CD14-positive monocyte (primary cell): ENCODE measurements at regions of chr19 and their contacts with region 1.

Region 1: DNA sequence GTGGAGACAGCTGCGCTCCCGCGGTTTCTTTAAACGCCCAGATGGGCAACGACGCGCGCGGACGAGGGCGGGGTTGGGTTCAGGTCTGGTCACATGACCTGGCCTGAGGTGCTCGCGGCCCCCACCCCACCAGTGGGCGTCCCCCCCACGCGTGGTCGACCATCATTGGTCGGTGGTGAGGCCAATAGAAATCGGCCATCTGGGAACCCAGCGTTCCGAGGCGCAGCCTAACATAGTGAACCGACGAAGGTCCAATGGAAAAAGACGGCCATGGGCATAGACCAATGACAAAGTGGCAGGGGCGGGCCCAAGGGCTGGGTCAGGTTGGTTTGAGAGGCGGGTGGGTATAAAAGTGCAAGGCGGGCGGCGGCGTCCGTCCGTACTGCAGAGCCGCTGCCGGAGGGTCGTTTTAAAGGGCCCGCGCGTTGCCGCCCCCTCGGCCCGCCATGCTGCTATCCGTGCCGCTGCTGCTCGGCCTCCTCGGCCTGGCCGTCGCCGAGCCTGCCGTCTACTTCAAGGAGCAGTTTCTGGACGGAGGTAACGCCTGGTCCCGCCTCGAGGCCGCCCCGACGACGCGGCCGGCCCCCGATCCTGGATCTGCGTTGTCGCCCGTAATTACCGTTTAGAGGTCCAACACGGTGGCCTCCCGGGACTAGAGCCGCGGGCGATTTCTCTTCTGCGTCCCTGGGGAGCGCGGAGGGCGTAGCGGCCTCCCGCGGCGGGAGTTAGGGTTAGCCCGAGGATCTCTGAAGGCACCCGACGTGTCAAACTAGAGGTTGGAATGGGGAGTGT is at the start of gene CALR:
- DNase-seq: peak; percentile 99 to 100 (median 100)
- H3K4me3 ChIP-seq: peak within 1 kb of the TSS; percentile 77 to 100 (median 77)
- H3K4me3 Mint-ChIP-seq: peak within 1 kb of the TSS; percentile 97 to 99
- H3K27ac ChIP-seq: peak within 1 kb of the TSS; percentile 82 to 98
- H3K27ac Mint-ChIP-seq: peak within 1 kb of the TSS; percentile 91 to 97 (median 96)
- H3K4me1 ChIP-seq: peaks cover 47 to 64% of the 10 kb centered on the region in 2 donors
- H3K4me1 Mint-ChIP-seq: peaks cover 54% of the 10 kb centered on the region
- H3K27me3 ChIP-seq: no peaks in the 10 kb centered on the region
- H3K27me3 Mint-ChIP-seq: peaks cover 0 to 2% (median 1%) of the 10 kb centered on the region in 3 donors
- CTCF ChIP-seq: no peak
- polyA plus RNA-seq, gene CALR: 109 to 441 (median 133) TPM

Region 2: GRCh38 chr19:12881172-12881808 is 57.1 kb before region 1 on chr19 and contains the start of gene DNASE2:
- intact Hi-C with region 1: loop called in 1 of 2 experiments (anchors 10 kb)
- DNase-seq: peak; percentile 96 to 98 (median 97)
- H3K4me3 ChIP-seq: peak within 1 kb of the TSS; percentile 57 to 80 (median 78)
- H3K4me3 Mint-ChIP-seq: peak within 1 kb of the TSS; percentile 86 to 92
- H3K27ac ChIP-seq: peak within 1 kb of the TSS; percentile 90 to 94
- H3K27ac Mint-ChIP-seq: peak within 1 kb of the TSS; percentile 97 to 98 (median 97)
- H3K4me1 ChIP-seq: peaks cover 59 to 68% of the 10 kb centered on the region in 2 donors
- H3K4me1 Mint-ChIP-seq: peaks cover 52% of the 10 kb centered on the region
- H3K27me3 ChIP-seq: peaks cover 0 to 4% of the 10 kb centered on the region in 2 donors
- H3K27me3 Mint-ChIP-seq: peaks cover 4 to 20% (median 11%) of the 10 kb centered on the region in 3 donors
- CTCF ChIP-seq: no peak
- polyA plus RNA-seq, gene DNASE2: 38.8 to 91.6 (median 44.8) TPM

Region 3: GRCh38 chr19:12890787-12891552 is 47.5 kb before region 1 on chr19 and contains the start of gene GCDH:
- intact Hi-C with region 1: loop called (anchors 5 to 10 kb)
- DNase-seq: peak; percentile 96 to 99 (median 97)
- H3K4me3 ChIP-seq: peak within 1 kb of the TSS; percentile 39 to 88 (median 75)
- H3K4me3 Mint-ChIP-seq: peak within 1 kb of the TSS; percentile 89 to 94
- H3K27ac ChIP-seq: peak within 1 kb of the TSS; percentile 33 to 78
- H3K27ac Mint-ChIP-seq: peak within 1 kb of the TSS; percentile 80 to 94 (median 89)
- H3K4me1 ChIP-seq: peaks cover 19 to 24% of the 10 kb centered on the region in 2 donors
- H3K4me1 Mint-ChIP-seq: peaks cover 24% of the 10 kb centered on the region
- H3K27me3 ChIP-seq: peaks cover 0 to 6% of the 10 kb centered on the region in 2 donors
- H3K27me3 Mint-ChIP-seq: peaks cover 7 to 14% (median 11%) of the 10 kb centered on the region in 3 donors
- CTCF ChIP-seq: no peak
- polyA plus RNA-seq, gene GCDH: 7.3 to 30.5 (median 9.6) TPM

Region 4: DNA sequence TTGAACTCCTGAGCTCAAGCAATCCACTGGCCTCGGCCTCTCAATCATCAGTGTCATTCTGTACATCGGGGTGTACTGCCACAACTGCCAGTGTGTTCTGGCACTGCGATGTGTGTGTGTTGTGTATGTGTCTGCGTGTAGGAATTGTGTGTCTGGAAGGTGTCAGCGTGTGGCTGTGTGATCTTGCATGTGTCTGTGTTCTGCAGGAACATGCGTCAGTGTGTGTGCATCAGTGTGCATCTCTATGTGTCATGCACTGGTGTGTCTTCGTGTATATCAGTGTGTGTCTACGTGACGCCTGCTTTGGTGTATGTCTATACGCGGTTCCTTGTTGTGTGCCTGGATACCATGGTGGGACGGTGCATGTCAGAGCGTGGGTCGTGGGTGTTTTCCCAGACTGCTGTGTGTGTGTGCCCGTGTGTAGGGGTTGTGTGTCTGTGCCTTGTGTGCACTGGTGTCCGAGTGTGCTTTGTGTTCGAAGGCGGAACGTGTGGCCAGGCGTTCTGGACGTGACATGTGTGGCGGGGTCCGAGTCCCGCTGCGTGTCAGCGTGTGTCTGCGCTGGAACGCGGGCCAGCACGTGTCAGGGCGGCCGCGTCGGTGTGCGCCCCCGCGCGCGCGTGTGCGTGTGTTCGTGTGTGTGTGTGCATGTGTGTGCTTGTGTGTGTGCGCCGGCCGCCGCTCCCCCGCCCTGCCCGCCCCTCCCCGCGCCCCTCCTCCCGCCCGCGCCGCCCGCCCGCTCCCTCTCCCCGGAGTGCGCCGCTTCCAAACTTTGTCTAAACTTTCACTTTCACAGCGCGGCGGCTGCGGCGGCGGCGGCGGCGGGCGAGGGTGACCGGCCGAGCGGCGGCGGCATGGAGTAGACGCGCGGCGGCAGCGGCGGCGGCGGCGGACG is 56.5 kb after region 1 on chr19 and contains the start of gene NFIX:
- intact Hi-C with region 1: no loop called
- DNase-seq: peak in 2 of 3 donors; percentile 39 to 54
- H3K4me3 ChIP-seq: peak within 1 kb of the TSS; percentile 61 to 83 (median 65)
- H3K4me3 Mint-ChIP-seq: peak within 1 kb of the TSS; percentile 93 to 99
- H3K27ac ChIP-seq: no peak within 1 kb of the TSS
- H3K27ac Mint-ChIP-seq: peak within 1 kb of the TSS in 6 of 7 donors; percentile 6 to 73 (median 59)
- H3K4me1 ChIP-seq: peaks cover 13 to 17% of the 10 kb centered on the region in 2 donors
- H3K4me1 Mint-ChIP-seq: peaks cover 11% of the 10 kb centered on the region
- H3K27me3 ChIP-seq: peaks cover 0 to 28% of the 10 kb centered on the region in 2 donors
- H3K27me3 Mint-ChIP-seq: peaks cover 30 to 45% (median 40%) of the 10 kb centered on the region in 3 donors
- CTCF ChIP-seq: no peak
- polyA plus RNA-seq, gene NFIX: 0.25 to 3.7 (median 0.90) TPM

Region 5: GRCh38 chr19:13033819-13034611 is 95.6 kb after region 1 on chr19:
- intact Hi-C with region 1: no loop called
- DNase-seq: peak; percentile 15 to 27 (median 23)
- H3K4me3 ChIP-seq: no peak overlapping the region
- H3K4me3 Mint-ChIP-seq: no peak overlapping the region
- H3K27ac ChIP-seq: no peak overlapping the region
- H3K27ac Mint-ChIP-seq: no peak overlapping the region
- H3K4me1 ChIP-seq: no peaks in the 10 kb centered on the region
- H3K4me1 Mint-ChIP-seq: peaks cover 6% of the 10 kb centered on the region
- H3K27me3 ChIP-seq: no peaks in the 10 kb centered on the region
- H3K27me3 Mint-ChIP-seq: peaks cover 0 to 5% (median 2%) of the 10 kb centered on the region in 3 donors
- CTCF ChIP-seq: peak; percentile 75